AG04450 (cell line): ENCODE measurements at regions of chr11 and their contacts with region 1.

Region 1: GRCh38 chr11:62787005-62787759 is at the start of gene TMEM179B:
- DNase-seq: peak; percentile 93
- H3K4me3 ChIP-seq: peak within 1 kb of the TSS; percentile 89
- H3K27ac ChIP-seq: peak within 1 kb of the TSS; percentile 73
- H3K27me3 ChIP-seq: no peaks in the 10 kb centered on the region
- CTCF ChIP-seq: peak; percentile 70
- polyA plus RNA-seq, gene TMEM179B: 51.7 and 63.8 TPM in 2 replicates

Region 2: GRCh38 chr11:62538509-62539261 is 248.5 kb before region 1 on chr11:
- CTCF ChIA-PET with region 1: no interaction called
- POLR2A ChIA-PET with region 1: no interaction called
- DNase-seq: no peak
- H3K4me3 ChIP-seq: peak overlapping the region; percentile 46
- H3K27ac ChIP-seq: peak overlapping the region; percentile 39
- H3K27me3 ChIP-seq: no peaks in the 10 kb centered on the region
- CTCF ChIP-seq: no peak

Region 3: GRCh38 chr11:62753736-62754603 is 33.2 kb before region 1 on chr11 and contains the start of gene ZBTB3:
- CTCF ChIA-PET with region 1: interaction called, 14 read pairs
- POLR2A ChIA-PET with region 1: interaction called, 14 read pairs
- DNase-seq: peak; percentile 97
- H3K4me3 ChIP-seq: peak within 1 kb of the TSS; percentile 94
- H3K27ac ChIP-seq: peak within 1 kb of the TSS; percentile 80
- H3K27me3 ChIP-seq: no peaks in the 10 kb centered on the region
- CTCF ChIP-seq: no peak
- polyA plus RNA-seq, gene ZBTB3: 3.2 and 3.7 TPM in 2 replicates

Region 4: GRCh38 chr11:62799486-62799885 is 12.3 kb after region 1 on chr11:
- CTCF ChIA-PET with region 1: interaction called, 21 read pairs
- POLR2A ChIA-PET with region 1: interaction called, 3 read pairs
- DNase-seq: no peak
- H3K4me3 ChIP-seq: no peak overlapping the region
- H3K27ac ChIP-seq: no peak overlapping the region
- H3K27me3 ChIP-seq: no peaks in the 10 kb centered on the region
- CTCF ChIP-seq: no peak

Region 5: DNA sequence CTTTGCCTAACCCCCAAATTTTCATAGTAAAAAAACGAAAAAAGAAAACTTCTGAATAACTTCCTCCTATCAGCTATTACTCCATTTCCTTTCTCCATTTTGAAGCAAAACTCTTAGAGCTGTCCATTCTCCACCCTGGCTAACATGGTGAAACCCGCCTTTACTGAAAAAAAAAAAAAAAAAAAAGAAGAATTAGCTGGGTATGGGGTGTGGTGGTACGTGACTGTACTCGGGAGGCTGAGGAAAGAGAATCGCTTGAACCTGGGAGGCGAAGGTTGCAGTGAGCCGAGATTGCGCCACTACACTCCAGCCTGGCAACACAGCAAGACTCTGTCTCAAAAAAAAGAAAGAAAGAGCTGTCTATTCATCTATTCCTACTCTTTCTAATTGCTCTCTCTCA is 29.4 kb after region 1 on chr11:
- CTCF ChIA-PET with region 1: interaction called, 13 read pairs
- POLR2A ChIA-PET with region 1: interaction called, 6 read pairs
- DNase-seq: no peak
- H3K4me3 ChIP-seq: no peak overlapping the region
- H3K27ac ChIP-seq: no peak overlapping the region
- H3K27me3 ChIP-seq: no peaks in the 10 kb centered on the region
- CTCF ChIP-seq: no peak

Region 6: GRCh38 chr11:62855571-62856332 is 68.6 kb after region 1 on chr11:
- CTCF ChIA-PET with region 1: interaction called, 40 read pairs
- POLR2A ChIA-PET with region 1: interaction called, 13 read pairs
- DNase-seq: peak; percentile 98
- H3K4me3 ChIP-seq: peak overlapping the region; percentile 96
- H3K27ac ChIP-seq: peak overlapping the region; percentile 91
- H3K27me3 ChIP-seq: no peaks in the 10 kb centered on the region
- CTCF ChIP-seq: no peak

Region 7: DNA sequence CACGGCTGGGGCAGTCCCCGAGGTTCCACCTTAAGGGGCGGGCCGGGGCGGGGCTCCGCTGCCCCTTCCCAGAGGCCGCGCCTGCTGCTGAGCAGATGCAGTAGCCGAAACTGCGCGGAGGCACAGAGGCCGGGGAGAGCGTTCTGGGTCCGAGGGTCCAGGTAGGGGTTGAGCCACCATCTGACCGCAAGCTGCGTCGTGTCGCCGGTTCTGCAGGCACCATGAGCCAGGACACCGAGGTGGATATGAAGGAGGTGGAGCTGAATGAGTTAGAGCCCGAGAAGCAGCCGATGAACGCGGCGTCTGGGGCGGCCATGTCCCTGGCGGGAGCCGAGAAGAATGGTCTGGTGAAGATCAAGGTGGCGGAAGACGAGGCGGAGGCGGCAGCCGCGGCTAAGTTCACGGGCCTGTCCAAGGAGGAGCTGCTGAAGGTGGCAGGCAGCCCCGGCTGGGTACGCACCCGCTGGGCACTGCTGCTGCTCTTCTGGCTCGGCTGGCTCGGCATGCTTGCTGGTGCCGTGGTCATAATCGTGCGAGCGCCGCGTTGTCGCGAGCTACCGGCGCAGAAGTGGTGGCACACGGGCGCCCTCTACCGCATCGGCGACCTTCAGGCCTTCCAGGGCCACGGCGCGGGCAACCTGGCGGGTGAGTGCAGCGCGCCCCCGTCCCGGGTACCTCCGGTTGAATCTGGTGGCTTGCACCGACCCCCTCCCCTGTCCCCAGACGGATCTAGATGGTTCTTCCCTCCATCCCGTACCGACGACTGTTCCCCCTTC is 93.8 kb after region 1 on chr11 and contains the start of gene SLC3A2:
- CTCF ChIA-PET with region 1: interaction called, 5 read pairs
- POLR2A ChIA-PET with region 1: interaction called, 10 read pairs
- DNase-seq: peak; percentile 56
- H3K4me3 ChIP-seq: peak within 1 kb of the TSS; percentile 100
- H3K27ac ChIP-seq: peak within 1 kb of the TSS; percentile 99
- H3K27me3 ChIP-seq: no peaks in the 10 kb centered on the region
- CTCF ChIP-seq: peak; percentile 50; the same call in 1 of the 2 replicates
- polyA plus RNA-seq, gene SLC3A2: 263 and 284 TPM in 2 replicates